Dorsolateral prefrontal cortex (tissue), 120 donors: ENCODE measurements at regions of chr4 and their contacts with region 1.

Region 1: GRCh38 chr4:15130441-15130840 is 128.2 kb downstream of the CPEB2 start:
- DNase-seq: peak in 9 of 10 donors; percentile 50 to 72 (median 67)
- H3K4me3 ChIP-seq: peak overlapping the region in 2 of 59 donors; percentile 4 to 35
- H3K27ac ChIP-seq: peak overlapping the region in 57 of 59 donors; percentile 3 to 97 (median 89)
- H3K27me3 ChIP-seq: no peaks in the 10 kb centered on the region
- CTCF ChIP-seq: no peak

Region 2: GRCh38 chr4:15084780-15085179 is 45.7 kb before region 1 on chr4:
- intact Hi-C with region 1: no loop called
- DNase-seq: no peak
- H3K4me3 ChIP-seq: no peak overlapping the region
- H3K27ac ChIP-seq: no peak overlapping the region
- H3K27me3 ChIP-seq: no peaks in the 10 kb centered on the region
- CTCF ChIP-seq: no peak

Region 3: GRCh38 chr4:15106399-15106798 is 24.0 kb before region 1 on chr4:
- intact Hi-C with region 1: loop called in 1 of 2 experiments (anchors 2 kb)
- DNase-seq: no peak
- H3K4me3 ChIP-seq: no peak overlapping the region
- H3K27ac ChIP-seq: peak overlapping the region in 6 of 59 donors; percentile 14 to 50 (median 34)
- H3K27me3 ChIP-seq: no peaks in the 10 kb centered on the region
- CTCF ChIP-seq: no peak

Region 4: DNA sequence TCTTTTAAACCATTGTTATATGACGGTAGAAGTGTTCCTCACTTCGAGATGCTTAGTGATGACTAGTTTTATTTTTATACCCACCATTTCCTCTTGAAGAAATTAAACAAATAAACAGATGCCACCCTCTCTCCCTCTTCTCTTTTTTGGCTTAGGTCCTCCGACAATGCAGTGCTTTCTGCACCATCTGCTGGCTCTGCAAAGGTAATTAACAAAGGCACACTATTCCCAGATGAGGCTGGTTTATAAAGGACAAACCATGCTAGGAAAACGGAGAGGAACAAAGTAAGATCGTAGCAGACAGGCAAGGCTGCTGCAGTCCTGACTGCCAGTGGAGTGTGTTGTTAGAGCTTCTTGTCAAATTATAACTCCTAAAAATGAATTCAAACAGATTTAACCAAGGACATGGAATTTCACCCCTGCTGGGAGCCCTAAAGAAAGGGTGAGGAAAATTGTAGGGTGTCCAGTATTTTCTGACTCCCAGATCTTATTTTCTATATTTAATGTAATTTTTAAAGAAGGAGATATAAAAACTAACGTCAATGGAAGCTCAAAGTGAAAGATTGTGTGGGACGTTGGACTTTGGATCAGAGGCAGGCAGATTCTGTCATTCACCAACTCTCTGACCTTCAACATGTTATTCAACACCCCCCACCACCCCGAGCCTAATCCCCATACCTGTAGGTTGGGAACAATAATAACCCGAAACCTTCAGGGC is 14.0 kb after region 1 on chr4:
- intact Hi-C with region 1: loop called in 1 of 2 experiments (anchors 2 kb)
- DNase-seq: peak in 1 of 10 donors; percentile 64
- H3K4me3 ChIP-seq: peak overlapping the region in 7 of 59 donors; percentile 1 to 20 (median 8)
- H3K27ac ChIP-seq: peak overlapping the region in 53 of 59 donors; percentile 0 to 98 (median 75)
- H3K27me3 ChIP-seq: no peaks in the 10 kb centered on the region
- CTCF ChIP-seq: peak in 35 of 56 donors; percentile 5 to 56 (median 31)

Region 5: GRCh38 chr4:15188605-15189539 is 58.4 kb after region 1 on chr4:
- intact Hi-C with region 1: no loop called
- DNase-seq: no peak
- H3K4me3 ChIP-seq: no peak overlapping the region
- H3K27ac ChIP-seq: no peak overlapping the region
- H3K27me3 ChIP-seq: no peaks in the 10 kb centered on the region
- CTCF ChIP-seq: no peak